Posterior vena cava (tissue), 2 donors: ENCODE measurements at regions of chr2 and their contacts with region 1.

Region 1: GRCh38 chr2:62540408-62541168 is 34.6 kb upstream of the TMEM17 start:
- DNase-seq: no peak

Region 2: GRCh38 chr2:62489162-62489561 is 51.4 kb before region 1 on chr2:
- intact Hi-C with region 1: loop called in 1 of 2 experiments (anchors 2 kb)
- DNase-seq: no peak

Region 3: GRCh38 chr2:63287956-63288355 is 747.4 kb after region 1 on chr2:
- intact Hi-C with region 1: loop called in 1 of 2 experiments (anchors 5 kb)
- DNase-seq: no peak